ENCODE measurements at regions of chr15 and their contacts with region 1.

Region 1: DNA sequence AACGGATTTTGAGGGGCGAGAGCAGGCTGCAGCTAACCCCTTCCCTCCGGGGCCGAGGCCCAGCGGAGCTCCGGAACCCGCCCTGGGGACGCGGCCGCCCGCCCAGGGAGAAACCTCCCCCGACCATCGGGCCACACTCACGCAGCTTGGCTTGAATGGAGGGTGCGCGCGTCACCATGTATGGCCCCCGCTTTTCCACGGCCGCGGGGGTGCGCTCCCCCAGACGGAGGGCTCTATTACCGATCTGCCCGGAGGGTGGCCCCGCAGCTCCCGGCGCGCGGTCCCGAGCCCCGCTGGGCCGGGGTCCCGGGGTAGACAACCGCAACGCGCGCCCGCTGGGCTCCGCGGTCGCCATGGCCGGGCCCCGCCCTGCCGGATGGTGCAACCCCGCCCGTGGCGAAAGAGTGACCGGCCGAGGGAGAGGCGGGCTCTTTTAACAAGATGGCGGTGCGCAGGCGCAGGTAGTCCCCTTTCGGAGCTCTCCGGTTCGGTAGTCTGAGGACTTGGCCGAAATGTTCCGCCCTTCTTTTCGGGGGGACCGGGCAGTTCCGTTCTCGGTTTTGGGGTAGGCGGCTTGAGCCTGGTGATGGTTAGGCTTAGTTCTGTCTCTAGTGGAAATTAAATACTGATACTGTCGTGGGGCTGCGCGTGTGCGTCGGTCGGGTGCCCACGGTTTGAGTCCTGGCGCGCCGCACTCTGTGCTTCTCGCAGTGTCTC is at the start of gene FAM219B:
- DNase-seq: peak; percentile 97
- CTCF ChIP-seq: no peak

Region 2: GRCh38 chr15:74787251-74788041 is 119.2 kb before region 1 on chr15:
- CTCF ChIA-PET with region 1: interaction called, 13 read pairs
- POLR2A ChIA-PET with region 1: no interaction called
- DNase-seq: peak; percentile 82
- CTCF ChIP-seq: peak; percentile 78

Region 3: DNA sequence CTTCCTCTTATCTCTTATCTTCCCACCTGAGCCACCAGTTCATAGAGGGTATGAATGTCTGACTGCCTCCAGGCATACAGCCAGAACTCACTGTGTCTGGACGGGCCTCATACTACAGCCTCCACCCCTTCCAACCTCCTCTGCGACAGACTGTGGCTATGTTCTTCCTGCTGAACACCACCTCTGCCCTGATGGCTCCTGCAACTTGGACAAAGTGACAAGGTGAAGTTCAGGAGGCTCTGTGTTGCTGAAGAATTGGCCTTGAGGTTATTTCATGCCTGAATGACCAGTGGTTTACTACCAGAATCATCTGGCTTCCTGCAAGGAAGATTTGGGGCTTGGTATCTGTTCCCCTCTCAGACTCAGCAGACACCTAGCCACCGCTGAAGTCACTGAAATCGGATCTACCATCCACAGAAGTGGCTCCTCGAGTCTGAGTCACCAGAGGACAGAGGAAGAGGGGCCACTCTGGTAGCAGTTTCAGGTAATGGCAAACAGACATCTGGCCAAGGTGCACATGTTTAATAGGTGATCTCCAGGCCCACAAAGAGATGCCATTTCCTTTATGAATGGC is 49.4 kb before region 1 on chr15:
- CTCF ChIA-PET with region 1: interaction called, 44 read pairs
- POLR2A ChIA-PET with region 1: interaction called, 3 read pairs
- DNase-seq: peak; percentile 70
- CTCF ChIP-seq: no peak

Region 4: DNA sequence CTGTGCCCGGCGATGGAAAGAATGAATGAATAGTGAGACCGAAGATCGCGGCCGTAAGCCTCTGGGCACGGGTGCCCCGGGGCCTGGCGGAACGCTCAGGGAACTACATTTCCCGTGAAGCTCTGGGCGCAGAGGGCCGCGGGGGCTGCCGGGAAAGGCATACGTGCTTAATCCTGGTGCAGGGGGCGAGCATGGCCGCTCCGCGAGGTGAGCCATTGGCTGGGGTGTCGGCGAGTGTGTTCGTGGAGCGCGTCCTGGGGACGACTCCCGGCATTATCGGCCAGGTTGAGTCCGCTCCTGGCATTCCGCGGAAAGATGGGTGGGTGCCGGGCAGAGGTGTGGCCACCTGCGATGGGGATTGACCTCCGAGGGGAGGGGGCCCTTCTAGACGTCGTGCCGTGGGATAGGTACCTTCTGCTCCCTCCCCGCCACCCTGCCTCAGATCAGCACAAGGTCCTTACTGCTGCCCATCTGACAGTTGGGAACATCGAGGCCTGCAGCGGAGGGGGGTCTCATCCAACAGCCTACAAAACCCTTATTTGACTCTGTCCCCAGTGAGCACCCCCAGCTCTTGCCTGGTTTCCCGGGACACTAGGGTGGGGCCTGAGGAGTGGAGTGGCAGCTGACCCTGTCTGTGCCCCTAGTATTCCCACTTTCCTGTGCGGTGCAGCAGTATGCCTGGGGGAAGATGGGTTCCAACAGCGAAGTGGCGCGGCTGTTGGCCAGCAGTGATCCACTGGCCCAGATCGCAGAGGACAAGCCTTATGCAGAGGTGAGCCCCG is 16.5 kb before region 1 on chr15 and contains the start of gene MPI:
- CTCF ChIA-PET with region 1: interaction called, 131 read pairs
- POLR2A ChIA-PET with region 1: no interaction called
- DNase-seq: peak; percentile 96
- CTCF ChIP-seq: no peak

Region 5: DNA sequence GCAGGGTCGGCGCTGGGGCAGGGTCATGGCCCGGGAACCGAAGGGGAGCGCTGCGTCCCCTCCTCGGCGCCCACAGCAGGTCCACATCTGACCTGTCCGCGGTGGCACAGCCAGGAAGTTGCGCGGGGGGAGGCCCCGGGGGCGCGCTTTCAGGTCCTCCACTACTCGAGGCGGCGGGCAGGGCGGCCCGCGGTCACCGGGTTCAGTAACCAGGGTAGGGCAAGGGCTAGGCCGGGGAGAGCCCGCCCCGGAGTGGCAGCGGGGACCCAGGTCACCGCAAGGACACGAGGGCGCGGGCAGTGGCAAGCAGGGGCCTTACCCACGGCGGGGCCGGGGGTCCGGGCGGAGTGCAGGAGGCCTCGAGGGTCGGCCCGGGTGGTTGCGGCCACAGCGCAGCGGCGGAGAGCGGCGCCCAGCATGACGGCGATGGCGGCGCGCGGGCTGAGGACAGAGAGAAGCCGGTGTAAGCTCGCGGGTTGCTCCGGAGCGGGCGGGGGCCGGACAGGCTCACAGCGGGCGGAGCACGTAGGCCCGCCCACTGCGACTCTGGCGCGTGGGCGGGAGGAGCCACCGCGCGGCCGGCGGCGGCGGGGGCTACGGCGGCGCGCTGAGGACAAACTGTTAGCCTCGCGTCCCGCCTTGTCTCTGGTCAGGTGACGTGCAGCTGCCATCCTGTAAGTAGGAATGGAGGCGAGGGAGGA is 31.1 kb after region 1 on chr15 and contains the start of gene COX5A:
- CTCF ChIA-PET with region 1: interaction called, 18 read pairs
- POLR2A ChIA-PET with region 1: interaction called, 4 read pairs
- DNase-seq: peak; percentile 95
- CTCF ChIP-seq: no peak

Region 6: GRCh38 chr15:75237316-75237982 is 330.8 kb after region 1 on chr15:
- CTCF ChIA-PET with region 1: no interaction called
- POLR2A ChIA-PET with region 1: no interaction called
- DNase-seq: no peak
- CTCF ChIP-seq: no peak

Measured in GM10248 (cell line).